OCI-LY7 (cell line): ENCODE measurements at regions of chr6 and their contacts with region 1.

Region 1: DNA sequence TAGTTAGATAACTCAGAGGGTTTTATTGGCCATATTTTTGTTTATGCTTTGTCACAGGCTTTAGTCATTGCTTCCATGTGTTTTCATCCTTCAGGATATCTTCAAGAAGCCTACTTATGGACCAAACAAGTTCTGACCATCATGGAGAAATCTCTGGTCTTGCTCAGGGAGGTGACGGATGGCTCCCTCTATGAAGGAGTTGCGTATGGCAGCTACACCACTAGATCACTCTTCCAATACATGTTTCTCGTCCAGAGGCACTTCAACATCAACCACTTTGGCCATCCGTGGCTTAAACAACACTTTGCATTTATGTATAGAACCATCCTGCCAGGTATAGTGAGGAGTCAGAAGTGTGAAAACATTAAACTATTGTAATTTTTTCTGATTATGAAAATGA is 30.3 kb upstream of the CALHM6 start:
- DNase-seq: no peak
- H3K4me3 ChIP-seq: no peak overlapping the region
- H3K27ac ChIP-seq: no peak overlapping the region
- H3K4me1 ChIP-seq: no peaks in the 10 kb centered on the region
- CTCF ChIP-seq: no peak

Region 2: DNA sequence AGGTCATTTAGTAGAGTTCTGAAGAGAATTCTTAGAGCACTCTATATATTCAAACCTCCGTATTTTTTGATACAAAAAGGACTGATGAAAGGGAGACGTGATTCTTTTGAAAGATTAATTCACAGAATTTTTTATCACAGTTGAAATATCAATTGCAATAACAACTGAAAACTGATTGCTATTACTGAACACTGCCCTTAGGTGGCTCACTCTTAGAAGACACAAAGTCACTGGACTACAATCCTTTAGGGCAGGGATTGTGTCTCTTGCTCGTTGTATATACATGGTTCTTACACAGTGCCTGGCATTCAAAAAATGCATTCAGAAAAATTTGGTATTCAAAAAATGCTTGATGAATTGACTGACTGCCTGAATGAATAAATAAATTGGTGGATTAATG is 13.2 kb after region 1 on chr6:
- CTCF ChIA-PET with region 1: no interaction called
- POLR2A ChIA-PET with region 1: interaction called, 9 read pairs
- intact Hi-C with region 1: loop called (anchors 2 kb)
- DNase-seq: peak; percentile 44
- H3K4me3 ChIP-seq: no peak overlapping the region
- H3K27ac ChIP-seq: no peak overlapping the region
- H3K4me1 ChIP-seq: no peaks in the 10 kb centered on the region
- CTCF ChIP-seq: peak; percentile 78